ENCODE measurements at regions of chr2 and their contacts with region 1.

Region 1: GRCh38 chr2:54704688-54705605 is 18.5 kb upstream of the EML6 start:
- DNase-seq: no peak
- H3K4me3 ChIP-seq: no peak overlapping the region
- H3K27ac ChIP-seq: no peak overlapping the region
- H3K4me1 ChIP-seq: peaks cover 6 to 17% (median 6%) of the 10 kb centered on the region in 3 donors
- H3K27me3 ChIP-seq: peaks cover 0 to 13% (median 0%) of the 10 kb centered on the region in 4 donors
- CTCF ChIP-seq: peak in 5 of 6 experiments; percentile 54 to 77 (median 64)
- POLR2A ChIP-seq: no peak

Region 2: GRCh38 chr2:54657664-54658083 is 47.3 kb before region 1 on chr2:
- intact Hi-C with region 1: loop called (anchors 10 kb)
- DNase-seq: no peak
- H3K4me3 ChIP-seq: no peak overlapping the region
- H3K27ac ChIP-seq: peak overlapping the region in 2 of 4 donors; percentile 18 to 32
- H3K4me1 ChIP-seq: peaks cover 0 to 14% (median 0%) of the 10 kb centered on the region in 3 donors
- H3K27me3 ChIP-seq: no peaks in the 10 kb centered on the region
- CTCF ChIP-seq: peak in 5 of 6 experiments; percentile 35 to 69 (median 53)
- POLR2A ChIP-seq: no peak

Measured in esophagus squamous epithelium (tissue), 5 donors.